WTC11 (cell line): ENCODE measurements at regions of chr22 and their contacts with region 1.

Region 1: DNA sequence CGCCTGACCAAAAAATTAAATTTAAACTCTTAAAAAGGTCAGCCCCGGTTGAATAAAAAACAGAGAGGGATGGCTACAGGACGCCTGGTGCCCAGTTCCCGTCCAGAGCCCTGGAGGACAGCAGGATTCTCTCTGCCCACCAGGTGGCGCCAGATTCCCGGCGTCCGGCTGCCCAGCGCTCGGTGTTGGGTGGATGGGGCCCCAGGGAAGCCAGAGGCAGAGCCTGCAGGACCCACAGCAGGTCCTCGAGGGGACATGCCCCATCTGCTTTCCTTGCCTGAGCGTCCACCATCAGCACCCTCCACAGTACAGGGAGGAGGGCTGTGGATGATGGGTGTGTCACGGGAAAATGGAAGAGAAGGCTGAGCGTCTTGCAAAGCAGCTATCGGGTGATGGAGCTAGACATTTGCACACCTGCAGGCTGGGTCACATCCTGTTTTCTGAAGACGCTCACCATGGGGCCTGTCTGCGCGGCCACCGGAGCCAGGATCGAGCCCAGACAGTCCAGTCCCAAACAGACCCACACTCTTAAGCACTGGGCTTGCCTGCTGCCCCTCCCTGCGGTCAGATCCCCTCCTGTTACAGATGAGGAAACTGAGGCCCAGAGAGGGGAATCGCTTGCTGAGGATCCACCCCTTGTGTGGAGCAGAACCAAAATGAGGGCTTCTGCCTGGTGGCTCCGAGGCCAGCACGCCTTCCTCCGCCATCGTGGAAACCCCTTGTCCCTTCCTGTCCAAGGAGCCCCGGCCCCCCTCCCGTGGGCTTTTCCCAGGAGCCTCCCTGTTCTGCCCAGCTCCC is 18.5 kb upstream of the CBX7 start:
- DNase-seq: peak; percentile 91
- ATAC-seq: peak; percentile 43
- H3K4me3 Mint-ChIP-seq: no peak overlapping the region
- H3K27ac Mint-ChIP-seq: peak overlapping the region; percentile 92
- H3K4me1 Mint-ChIP-seq: peaks cover 63% of the 10 kb centered on the region
- H3K27me3 Mint-ChIP-seq: no peaks in the 10 kb centered on the region
- CTCF ChIP-seq: peak; percentile 97

Region 2: DNA sequence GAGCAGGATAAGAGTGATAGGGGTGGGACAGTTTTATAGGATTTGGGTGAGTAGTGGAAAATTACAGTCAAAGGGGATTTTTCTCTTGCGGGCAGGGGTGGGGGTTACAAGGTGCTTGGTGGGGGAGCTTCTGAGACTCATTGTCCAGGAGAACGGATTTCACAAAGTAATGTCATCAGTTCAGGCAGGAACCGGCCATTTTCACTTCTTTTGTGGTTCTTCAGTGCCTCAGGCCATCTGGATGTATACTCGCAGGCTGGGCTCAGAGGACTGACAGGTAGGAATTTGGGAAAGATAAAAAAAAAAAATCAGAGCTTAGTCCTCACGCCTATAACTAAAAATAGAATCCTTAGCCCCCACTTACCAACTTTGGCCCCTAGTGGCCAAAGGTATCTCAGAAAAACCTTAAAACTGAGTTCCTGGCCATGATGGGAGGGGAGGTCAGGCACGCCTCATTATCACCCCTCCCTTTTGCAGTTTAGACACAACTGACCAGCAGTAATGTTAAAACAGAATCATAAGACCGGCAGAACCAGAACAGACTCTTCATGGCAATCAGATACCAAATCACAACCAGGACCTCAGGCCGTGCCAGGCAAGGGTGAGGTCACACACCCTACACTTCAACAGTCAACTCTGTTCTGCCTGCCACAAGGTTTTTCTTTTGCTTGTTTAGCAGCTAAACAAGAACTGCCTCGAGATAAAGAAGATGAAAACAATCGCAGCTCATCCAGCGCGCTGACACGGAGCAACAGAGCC is 102.8 kb before region 1 on chr22:
- CTCF ChIA-PET with region 1: no interaction called
- POLR2A ChIA-PET with region 1: no interaction called
- DNase-seq: no peak
- ATAC-seq: no peak
- H3K4me3 Mint-ChIP-seq: no peak overlapping the region
- H3K27ac Mint-ChIP-seq: no peak overlapping the region
- H3K4me1 Mint-ChIP-seq: peaks cover 22% of the 10 kb centered on the region
- H3K27me3 Mint-ChIP-seq: no peaks in the 10 kb centered on the region
- CTCF ChIP-seq: no peak

Region 3: DNA sequence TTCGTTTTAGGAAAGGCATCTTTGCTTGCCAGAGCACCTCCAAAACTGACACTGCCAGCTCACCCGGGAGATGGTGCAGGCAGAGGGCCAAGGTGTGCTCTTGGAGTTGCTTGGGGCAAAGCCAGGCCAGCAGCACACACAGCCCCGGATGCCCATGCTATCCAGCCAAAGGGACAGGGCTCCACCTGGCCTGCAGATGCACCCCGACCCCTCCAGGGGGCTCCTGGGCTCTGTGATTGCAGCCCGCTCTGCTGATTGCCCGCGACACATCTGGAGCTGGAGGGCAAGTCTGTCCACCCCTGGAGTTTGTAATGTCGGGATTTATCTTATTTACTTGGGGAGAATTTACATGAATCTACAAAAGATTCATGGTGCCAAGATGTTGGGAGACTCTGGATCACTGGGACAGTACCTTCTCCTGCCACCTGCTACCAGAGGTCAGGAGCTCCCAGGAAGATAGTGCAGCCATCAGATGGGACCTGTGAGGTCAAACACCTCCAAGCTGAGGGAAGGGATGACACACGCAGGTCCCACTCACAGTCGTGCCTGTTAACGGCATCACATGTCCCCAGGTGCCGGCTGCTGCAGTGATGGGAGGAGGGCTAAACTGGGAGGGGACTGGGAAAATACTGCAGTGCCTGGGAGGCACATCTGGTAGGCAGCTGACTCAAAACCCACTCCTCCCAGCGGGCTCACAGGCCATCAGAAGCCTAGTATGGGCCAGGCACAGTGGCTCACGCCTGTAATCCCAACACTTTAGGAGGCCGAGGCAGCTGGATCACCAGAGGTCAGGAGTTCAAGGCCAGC is 35.7 kb before region 1 on chr22:
- CTCF ChIA-PET with region 1: interaction called, 26 read pairs
- POLR2A ChIA-PET with region 1: no interaction called
- DNase-seq: peak; percentile 90
- ATAC-seq: peak; percentile 94
- H3K4me3 Mint-ChIP-seq: no peak overlapping the region
- H3K27ac Mint-ChIP-seq: peak overlapping the region; percentile 79
- H3K4me1 Mint-ChIP-seq: peaks cover 28% of the 10 kb centered on the region
- H3K27me3 Mint-ChIP-seq: no peaks in the 10 kb centered on the region; the same call in 1 of the 2 replicates
- CTCF ChIP-seq: peak; percentile 67

Region 4: DNA sequence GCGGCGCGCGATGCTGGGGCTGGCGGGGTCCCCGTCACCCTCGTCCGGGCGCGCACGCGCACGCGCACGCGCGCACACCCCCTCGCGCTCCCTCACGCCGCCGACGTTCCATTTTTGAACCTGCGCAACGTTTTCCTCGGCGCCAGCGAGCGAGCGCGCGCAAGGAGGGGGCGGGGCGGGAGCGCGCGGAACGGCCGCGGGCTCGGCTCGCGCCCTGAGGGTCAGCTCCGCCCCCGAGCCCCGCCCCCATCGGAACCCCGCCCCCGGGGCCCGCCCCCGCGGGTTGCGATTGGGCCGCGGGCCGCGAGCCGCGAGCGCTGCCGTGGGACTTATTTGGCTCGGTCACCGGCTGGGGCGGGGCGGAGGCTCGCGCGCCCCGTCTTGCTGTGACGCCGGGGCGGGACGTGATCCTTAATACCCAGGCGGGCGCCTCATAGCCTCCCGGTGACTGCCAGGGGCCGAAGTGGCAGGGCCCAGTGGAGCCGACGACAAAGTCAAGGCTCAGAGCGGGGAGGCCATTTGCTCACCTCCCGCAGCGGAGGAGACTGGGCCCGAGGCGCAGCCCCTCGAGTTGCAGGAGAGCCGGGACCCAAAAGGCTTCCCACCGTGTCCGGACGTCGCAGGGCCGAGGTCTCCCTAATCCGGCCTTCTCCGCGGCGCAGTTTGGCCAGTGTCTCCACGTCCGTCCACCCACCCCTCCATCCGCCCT is 18.4 kb before region 1 on chr22 and contains the start of gene CBX7:
- CTCF ChIA-PET with region 1: interaction called, 10 read pairs
- POLR2A ChIA-PET with region 1: interaction called, 4 read pairs
- DNase-seq: peak; percentile 87
- ATAC-seq: peak; percentile 68
- H3K4me3 Mint-ChIP-seq: peak within 1 kb of the TSS; percentile 71
- H3K27ac Mint-ChIP-seq: no peak within 1 kb of the TSS
- H3K4me1 Mint-ChIP-seq: peaks cover 26% of the 10 kb centered on the region
- H3K27me3 Mint-ChIP-seq: peaks cover 42% of the 10 kb centered on the region
- CTCF ChIP-seq: no peak
- total RNA-seq, gene CBX7: 10.6 to 11.1 TPM (median 10.6 TPM) in 3 replicates

Region 5: GRCh38 chr22:39230261-39231196 is 59.5 kb after region 1 on chr22:
- CTCF ChIA-PET with region 1: interaction called, 14 read pairs
- POLR2A ChIA-PET with region 1: interaction called, 18 read pairs
- DNase-seq: peak; percentile 79
- ATAC-seq: peak; percentile 72
- H3K4me3 Mint-ChIP-seq: peak overlapping the region; percentile 50
- H3K27ac Mint-ChIP-seq: peak overlapping the region; percentile 92
- H3K4me1 Mint-ChIP-seq: peaks cover 54% of the 10 kb centered on the region
- H3K27me3 Mint-ChIP-seq: peaks cover 22% of the 10 kb centered on the region
- CTCF ChIP-seq: no peak

Region 6: DNA sequence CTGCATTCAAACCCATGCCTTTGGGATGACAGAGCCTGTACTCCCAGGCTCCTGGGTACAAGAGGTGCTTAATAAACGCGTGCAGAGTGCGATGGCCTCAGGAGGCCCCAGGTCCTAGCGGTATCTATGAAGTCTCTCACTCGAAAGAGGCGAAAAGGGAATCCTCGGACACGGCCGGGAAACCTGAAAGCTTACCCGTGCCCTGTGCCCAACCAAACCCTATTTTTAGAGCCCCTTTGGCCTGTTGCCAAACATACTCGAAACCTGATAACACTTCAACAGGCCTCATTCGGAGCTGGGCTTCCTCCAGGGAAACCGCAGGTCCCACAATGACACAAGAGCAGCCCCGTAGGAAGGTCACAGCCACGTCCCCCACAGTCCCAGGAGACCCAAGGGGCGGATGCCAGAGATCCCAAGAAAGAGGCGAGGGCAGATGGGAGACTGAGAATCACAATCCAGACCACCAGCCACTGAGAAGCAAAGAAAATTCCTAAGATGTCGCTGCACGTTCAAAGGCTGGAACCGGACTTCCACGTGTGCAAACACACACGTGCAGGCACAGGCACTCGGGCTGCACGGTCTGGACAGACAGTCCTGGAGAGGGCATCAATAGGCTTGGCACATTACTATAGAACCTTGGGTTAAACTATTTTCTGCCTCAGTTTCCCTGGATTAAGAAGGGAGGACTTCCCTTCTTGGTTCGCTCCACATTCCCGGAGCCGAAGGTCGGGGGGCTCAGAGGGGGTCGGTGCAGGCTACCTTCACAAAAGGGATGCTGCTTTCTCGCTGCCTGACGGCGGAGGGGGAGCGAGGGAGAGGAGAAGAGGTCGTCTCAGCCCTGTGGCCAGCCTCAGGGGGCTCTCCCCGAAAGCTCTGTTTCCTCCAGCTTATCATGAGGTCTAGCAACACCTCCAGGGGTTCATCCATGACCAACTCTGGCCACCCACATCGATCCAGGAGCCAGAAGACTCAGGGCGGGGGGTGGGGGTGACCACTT is 65.6 kb after region 1 on chr22:
- CTCF ChIA-PET with region 1: interaction called, 14 read pairs
- POLR2A ChIA-PET with region 1: interaction called, 3 read pairs
- DNase-seq: no peak
- ATAC-seq: no peak
- H3K4me3 Mint-ChIP-seq: no peak overlapping the region
- H3K27ac Mint-ChIP-seq: no peak overlapping the region
- H3K4me1 Mint-ChIP-seq: peaks cover 60% of the 10 kb centered on the region
- H3K27me3 Mint-ChIP-seq: peaks cover 59% of the 10 kb centered on the region
- CTCF ChIP-seq: no peak

Region 7: GRCh38 chr22:39300186-39300830 is 129.3 kb after region 1 on chr22:
- CTCF ChIA-PET with region 1: interaction called, 13 read pairs
- POLR2A ChIA-PET with region 1: interaction called, 8 read pairs
- DNase-seq: peak; percentile 44
- ATAC-seq: peak; percentile 27
- H3K4me3 Mint-ChIP-seq: no peak overlapping the region
- H3K27ac Mint-ChIP-seq: peak overlapping the region; percentile 76
- H3K4me1 Mint-ChIP-seq: peaks cover 36% of the 10 kb centered on the region
- H3K27me3 Mint-ChIP-seq: no peaks in the 10 kb centered on the region; the same call in 1 of the 2 replicates
- CTCF ChIP-seq: no peak

Region 8: DNA sequence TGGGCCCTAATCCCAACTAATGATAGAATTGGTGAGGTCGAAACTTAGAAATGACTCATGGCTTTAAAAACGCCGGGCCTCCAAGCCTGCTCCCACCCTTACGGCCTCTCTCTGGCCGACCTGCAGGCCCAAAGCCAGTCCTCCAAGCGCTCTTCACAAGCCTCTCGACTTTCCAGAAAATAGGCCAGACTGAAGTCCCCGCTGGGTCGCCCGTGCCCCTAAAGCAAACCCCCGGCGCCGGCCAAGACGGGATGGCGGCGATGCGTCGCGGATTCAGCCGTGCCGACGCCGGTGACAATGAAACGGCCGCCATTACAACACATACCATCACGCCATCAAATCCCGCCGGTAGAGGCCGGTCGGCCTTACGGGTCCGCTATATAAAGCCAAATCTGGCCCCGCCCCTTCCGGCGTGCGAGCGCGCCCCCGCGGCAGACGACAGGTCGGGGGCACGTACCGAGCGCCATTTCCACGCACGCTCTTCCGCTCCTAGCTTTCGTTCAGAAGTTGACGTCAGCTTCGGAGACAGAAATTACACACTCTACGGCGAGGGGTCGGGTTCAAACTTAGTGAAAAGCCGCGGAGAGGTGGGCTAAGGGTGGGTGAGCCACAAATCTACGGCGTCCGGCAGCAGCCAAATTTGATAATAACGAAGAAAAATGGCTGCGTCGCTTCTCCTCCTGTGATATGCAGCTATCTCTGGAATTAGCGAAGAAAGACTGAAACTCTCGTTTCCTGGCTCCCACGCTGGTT is 148.4 kb after region 1 on chr22 and contains the start of gene RPL3:
- CTCF ChIA-PET with region 1: interaction called, 6 read pairs
- POLR2A ChIA-PET with region 1: interaction called, 10 read pairs
- DNase-seq: peak; percentile 93
- ATAC-seq: peak; percentile 64
- H3K4me3 Mint-ChIP-seq: peak within 1 kb of the TSS; percentile 99
- H3K27ac Mint-ChIP-seq: peak within 1 kb of the TSS; percentile 100
- H3K4me1 Mint-ChIP-seq: peaks cover 44% of the 10 kb centered on the region
- H3K27me3 Mint-ChIP-seq: peaks cover 4% of the 10 kb centered on the region; the same call in 1 of the 2 replicates
- CTCF ChIP-seq: no peak
- total RNA-seq, gene RPL3: 3,009 to 3,279 TPM (median 3,249 TPM) in 3 replicates

Region 9: GRCh38 chr22:39462443-39463221 is 291.6 kb after region 1 on chr22:
- CTCF ChIA-PET with region 1: no interaction called
- POLR2A ChIA-PET with region 1: no interaction called
- DNase-seq: peak; percentile 62
- ATAC-seq: peak; percentile 81
- H3K4me3 Mint-ChIP-seq: no peak overlapping the region
- H3K27ac Mint-ChIP-seq: 0 out of 2 replicates have a peak overlapping the region, but pooled peaks have one; percentile 12
- H3K4me1 Mint-ChIP-seq: peaks cover 11% of the 10 kb centered on the region
- H3K27me3 Mint-ChIP-seq: peaks cover 21% of the 10 kb centered on the region
- CTCF ChIP-seq: no peak

Region 10: DNA sequence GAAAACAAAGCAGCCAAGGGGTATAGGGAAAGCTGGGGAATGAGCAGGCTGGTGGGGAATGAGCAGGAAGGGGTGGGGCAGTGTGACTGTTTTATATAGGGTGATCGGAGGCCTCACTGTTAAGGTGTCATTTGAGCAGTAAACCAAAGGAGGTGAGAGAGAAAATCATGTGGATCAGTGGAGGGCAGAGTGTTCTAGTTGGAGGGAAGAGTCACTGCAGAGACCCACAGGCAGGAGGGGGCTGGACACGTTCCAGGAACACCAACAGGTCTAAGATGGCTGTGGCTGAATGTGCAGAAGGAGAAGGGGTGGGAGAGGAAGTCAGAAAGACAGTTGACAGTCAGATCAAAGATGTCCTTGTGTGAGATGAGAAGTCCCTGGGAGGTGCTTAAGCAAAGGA is 618.8 kb after region 1 on chr22:
- CTCF ChIA-PET with region 1: no interaction called
- POLR2A ChIA-PET with region 1: no interaction called
- DNase-seq: no peak
- ATAC-seq: no peak
- H3K4me3 Mint-ChIP-seq: no peak overlapping the region
- H3K27ac Mint-ChIP-seq: no peak overlapping the region
- H3K4me1 Mint-ChIP-seq: no peaks in the 10 kb centered on the region
- H3K27me3 Mint-ChIP-seq: peaks cover 8% of the 10 kb centered on the region; the same call in 1 of the 2 replicates
- CTCF ChIP-seq: no peak